ENCODE measurements at regions of chr11 and their contacts with region 1.

Region 1: DNA sequence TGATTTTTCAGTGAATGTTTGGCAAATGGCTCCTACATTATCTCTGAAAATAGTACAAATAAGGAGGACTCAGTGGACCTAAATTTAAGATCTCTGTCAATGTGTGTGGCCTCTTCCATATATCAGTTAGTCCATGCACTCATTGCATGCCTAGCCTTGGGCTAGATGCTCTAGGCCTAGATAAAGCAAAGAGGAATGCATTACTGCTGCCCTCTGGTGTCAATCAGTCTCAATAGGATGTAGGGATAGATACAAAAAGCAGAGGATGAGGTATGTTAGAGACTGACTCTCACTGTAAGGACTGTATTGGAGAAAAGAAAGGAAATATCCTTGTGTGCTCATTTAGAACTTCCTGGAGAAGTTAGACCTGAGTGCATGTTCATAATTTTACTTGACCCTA is 42.0 kb downstream of the MS4A2 start:
- DNase-seq: no peak
- ATAC-seq: peak; percentile 65 to 69

Region 2: GRCh38 chr11:59728913-59729312 is 401.6 kb before region 1 on chr11:
- intact Hi-C with region 1: no loop called
- DNase-seq: no peak
- ATAC-seq: peak in 1 of 2 donors; percentile 29

Region 3: DNA sequence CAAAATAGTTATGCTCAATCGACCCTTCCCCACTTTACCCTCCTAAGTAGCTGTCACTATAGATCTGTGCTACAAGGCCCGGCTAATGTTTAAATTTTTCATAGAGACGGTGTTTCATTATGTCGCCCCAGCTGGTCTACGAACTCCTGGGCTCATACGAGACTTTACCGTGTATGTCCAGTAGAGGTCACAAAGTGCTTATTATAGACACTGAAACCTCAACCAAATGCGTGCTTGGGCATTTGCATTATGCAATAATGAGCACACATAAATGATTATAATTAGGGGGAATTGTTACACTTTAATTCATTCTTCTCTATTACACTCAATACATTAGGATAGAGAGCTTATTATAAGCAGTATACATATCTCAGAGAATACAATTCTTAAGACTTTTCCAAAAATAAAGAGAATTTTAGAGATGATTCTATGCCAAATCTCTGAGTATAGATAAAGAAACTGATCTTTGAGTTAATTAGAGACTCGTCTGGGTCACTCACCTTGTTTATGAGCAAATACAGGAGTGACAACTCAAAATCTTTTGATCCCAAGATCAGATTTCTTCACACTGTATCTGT is 307.4 kb before region 1 on chr11:
- intact Hi-C with region 1: loop called (anchors 2 to 5 kb)
- DNase-seq: no peak
- ATAC-seq: peak; percentile 79 to 83